ENCODE measurements at regions of chr12 and their contacts with region 1.

Region 1: GRCh38 chr12:3299929-3300832 is 190.8 kb upstream of the PRMT8 start:
- DNase-seq: peak; percentile 76
- H3K4me3 ChIP-seq: peak overlapping the region; percentile 46
- H3K27ac ChIP-seq: peak overlapping the region; percentile 93
- H3K27me3 ChIP-seq: no peaks in the 10 kb centered on the region
- CTCF ChIP-seq: peak; percentile 98

Region 2: GRCh38 chr12:3168223-3169221 is 131.7 kb before region 1 on chr12:
- CTCF ChIA-PET with region 1: interaction called, 11 read pairs
- POLR2A ChIA-PET with region 1: no interaction called
- DNase-seq: peak; percentile 90
- H3K4me3 ChIP-seq: peak overlapping the region; percentile 17
- H3K27ac ChIP-seq: peak overlapping the region; percentile 96
- H3K27me3 ChIP-seq: no peaks in the 10 kb centered on the region
- CTCF ChIP-seq: no peak

Region 3: DNA sequence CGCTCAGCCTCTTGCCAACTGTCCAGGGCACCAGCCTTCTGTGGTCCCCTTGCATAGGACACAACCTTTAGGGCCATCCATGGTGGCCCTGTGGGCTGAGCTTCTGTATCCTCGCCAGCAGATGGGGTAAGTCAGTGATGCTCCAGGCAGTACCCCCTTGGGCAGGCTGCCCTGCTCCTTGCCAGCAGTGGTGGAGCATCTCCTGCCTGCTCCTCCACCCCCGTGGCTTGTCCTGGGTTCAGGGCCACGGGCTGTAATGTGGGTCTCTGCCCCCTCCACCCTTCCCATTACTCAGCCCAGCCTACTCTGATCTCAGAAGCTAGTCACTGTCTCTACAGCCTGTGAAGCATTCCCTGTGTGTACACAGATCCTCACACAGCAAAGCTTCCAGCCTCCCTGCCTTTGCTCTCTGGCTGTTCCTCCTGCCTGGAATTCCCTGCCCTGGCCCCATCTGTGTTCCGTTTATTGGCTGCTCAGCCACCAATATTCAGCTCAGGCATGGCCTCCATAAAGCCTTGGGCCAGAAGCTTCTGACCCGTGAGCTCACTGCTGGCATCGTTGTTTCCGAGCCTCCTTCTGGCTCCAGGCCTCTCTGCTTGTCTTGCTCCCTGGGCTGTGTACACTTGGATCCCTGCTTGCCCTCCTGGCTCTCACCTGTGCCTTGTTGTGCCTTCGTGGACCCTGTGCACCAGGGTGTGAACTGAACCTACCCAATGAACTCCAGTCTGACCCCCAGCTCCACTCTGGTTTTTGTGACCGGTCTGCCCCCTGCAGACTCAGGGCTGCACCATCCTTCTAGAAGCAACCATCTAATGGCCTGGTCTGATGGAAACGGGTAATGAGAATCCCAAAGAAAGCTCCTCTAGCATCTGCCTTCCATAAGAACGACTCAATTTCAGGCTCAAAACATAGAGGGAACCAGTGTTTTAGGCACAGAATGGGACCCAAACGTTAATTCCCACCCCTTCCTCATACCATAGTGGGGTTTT is 13.8 kb after region 1 on chr12:
- CTCF ChIA-PET with region 1: interaction called, 126 read pairs
- POLR2A ChIA-PET with region 1: interaction called, 5 read pairs
- DNase-seq: no peak
- H3K4me3 ChIP-seq: no peak overlapping the region
- H3K27ac ChIP-seq: no peak overlapping the region
- H3K27me3 ChIP-seq: peaks cover 17% of the 10 kb centered on the region
- CTCF ChIP-seq: peak; percentile 47

Region 4: DNA sequence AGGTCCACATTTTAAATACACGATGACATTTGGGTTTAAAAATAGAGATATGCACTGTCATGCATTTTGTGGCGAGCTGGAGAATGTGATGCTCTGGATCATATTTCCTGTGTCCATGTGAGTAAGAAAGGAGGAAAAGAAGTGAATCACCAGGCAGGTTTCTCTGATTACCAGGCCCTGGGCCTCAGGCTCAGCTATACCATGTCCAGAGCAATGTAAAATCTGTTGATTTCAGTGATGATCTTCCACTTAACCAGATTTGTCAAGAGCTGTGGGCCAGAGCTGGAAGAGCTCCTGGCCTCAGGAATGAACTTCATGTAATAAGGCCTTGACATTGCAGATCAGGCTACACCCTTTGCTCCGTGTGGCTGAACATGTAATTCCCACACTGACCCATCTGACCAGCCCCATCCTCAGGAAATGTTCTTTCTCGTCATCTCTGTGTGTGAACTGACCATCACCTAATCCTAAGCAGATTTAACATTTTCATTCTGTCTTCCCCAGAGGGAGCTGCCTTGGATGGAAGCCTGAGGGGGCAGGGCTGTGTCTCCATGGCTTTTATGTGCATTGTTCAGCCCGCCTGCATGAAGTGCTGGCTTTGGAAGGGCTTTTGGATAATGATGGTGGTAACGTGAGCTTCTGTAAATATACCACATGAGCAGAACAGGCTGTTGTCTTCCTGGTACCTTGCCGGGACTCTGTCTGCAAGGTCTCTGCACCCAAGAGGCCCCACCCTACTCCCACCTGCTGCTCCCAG is 398.2 kb after region 1 on chr12:
- CTCF ChIA-PET with region 1: interaction called, 28 read pairs
- POLR2A ChIA-PET with region 1: no interaction called
- DNase-seq: peak; percentile 82
- H3K4me3 ChIP-seq: no peak overlapping the region
- H3K27ac ChIP-seq: peak overlapping the region; percentile 98
- H3K27me3 ChIP-seq: no peaks in the 10 kb centered on the region
- CTCF ChIP-seq: no peak

Region 5: DNA sequence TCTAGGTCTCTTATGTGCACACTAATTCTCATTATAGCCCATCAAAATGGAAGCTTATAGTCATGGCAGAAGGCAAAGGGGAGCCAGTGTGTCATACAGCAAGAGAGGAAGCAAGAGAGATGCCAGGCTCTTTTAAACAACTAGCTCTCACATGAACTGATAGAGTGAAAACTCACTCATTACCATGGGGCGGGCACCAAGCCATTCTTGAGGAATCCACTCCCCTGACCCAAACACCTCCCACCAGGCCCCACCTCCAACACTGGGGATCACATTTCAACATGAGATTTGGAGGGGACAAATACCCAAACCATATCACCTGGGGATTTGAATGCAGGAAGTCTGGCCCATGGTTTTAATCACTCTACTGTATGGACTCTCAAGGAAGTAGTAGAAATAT is 489.7 kb after region 1 on chr12:
- CTCF ChIA-PET with region 1: interaction called, 11 read pairs
- POLR2A ChIA-PET with region 1: no interaction called
- DNase-seq: no peak
- H3K4me3 ChIP-seq: no peak overlapping the region
- H3K27ac ChIP-seq: no peak overlapping the region
- H3K27me3 ChIP-seq: peaks cover 3% of the 10 kb centered on the region
- CTCF ChIP-seq: no peak

Region 6: GRCh38 chr12:3872800-3873636 is 572.8 kb after region 1 on chr12 and contains the start of gene PARP11:
- CTCF ChIA-PET with region 1: interaction called, 12 read pairs
- POLR2A ChIA-PET with region 1: interaction called, 3 read pairs
- DNase-seq: peak; percentile 88
- H3K4me3 ChIP-seq: peak within 1 kb of the TSS; percentile 79
- H3K27ac ChIP-seq: peak within 1 kb of the TSS; percentile 95
- H3K27me3 ChIP-seq: no peaks in the 10 kb centered on the region
- CTCF ChIP-seq: no peak
- polyA plus RNA-seq, gene PARP11: 5.4 and 6.9 TPM in 2 replicates

Measured in AG04450 (cell line).